Right cardiac atrium (tissue), 5 donors: ENCODE measurements at regions of chr12 and their contacts with region 1.

Region 1: DNA sequence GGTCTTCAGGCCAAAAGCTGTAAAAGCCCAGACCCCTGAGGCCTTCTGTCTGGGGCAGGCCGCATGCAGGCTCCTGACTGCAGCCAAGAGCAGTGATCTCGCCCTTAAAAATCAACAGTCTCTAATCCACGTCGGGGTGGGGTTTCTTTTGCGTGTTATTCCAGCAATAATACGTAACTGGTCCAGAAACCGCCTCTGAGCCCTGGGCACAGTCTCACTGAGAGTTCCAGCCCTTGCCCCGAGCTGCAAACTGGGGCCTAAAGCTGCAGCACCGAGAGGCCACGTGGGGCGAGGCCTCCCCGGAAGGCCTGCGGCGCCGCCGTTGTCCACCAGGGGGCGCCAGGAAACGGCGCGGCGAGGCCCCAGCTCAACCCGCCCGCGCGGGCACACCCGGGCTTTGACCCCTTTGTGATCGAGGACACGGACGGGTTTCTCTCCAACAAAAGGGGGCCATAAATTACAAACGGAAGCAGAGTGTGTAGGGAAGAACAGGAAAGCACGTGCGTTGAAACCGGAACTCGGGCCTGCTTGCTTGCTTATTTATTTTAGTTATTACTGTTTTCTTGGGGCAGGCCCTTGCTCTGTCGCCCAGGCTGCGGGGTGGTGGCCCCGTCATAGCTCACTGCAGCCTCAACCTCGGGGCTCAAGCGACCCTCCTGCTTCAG is 87.2 kb downstream of the NINJ2 start:
- DNase-seq: peak; percentile 88 to 95 (median 95)
- ATAC-seq: peak; percentile 74 to 82
- H3K4me3 ChIP-seq: no peak overlapping the region
- H3K27ac ChIP-seq: peak overlapping the region; percentile 75
- H3K4me1 ChIP-seq: peaks cover 12% of the 10 kb centered on the region
- H3K27me3 ChIP-seq: no peaks in the 10 kb centered on the region

Region 2: DNA sequence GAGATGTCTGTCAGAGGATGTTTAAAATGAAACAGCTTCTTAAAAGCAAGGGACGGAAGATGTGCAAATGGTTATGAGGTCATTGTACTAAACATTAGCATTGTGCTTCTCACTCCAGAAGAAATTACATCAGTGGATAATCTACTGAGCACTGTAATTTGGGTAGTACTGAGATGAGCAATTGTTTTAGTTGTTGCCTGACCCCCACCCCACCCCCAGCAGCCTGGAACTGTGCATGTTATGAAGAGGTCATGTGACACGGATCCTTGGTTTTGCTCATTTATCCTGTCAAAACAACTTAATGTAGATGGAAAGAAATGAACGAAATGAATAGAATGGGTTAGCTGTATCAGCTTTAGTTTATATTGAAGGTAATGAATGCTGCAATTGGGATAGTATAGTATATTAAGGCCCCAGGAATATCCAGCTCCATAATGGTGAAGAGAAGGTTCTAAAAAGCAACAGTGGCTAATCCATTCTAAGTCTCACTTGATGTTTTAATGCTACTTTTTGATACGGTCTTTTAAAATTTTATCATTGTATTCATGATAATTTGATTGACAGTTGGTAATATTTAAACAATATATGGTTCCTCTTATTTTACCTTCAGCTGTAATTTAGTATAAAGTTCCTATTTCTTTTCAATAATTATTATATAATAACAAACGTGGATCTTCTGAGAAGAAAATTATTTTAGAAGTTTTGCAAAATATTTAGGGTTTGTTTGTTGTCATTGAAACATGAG is 234.8 kb after region 1 on chr12:
- intact Hi-C with region 1: loop called (anchors 5 kb)
- DNase-seq: no peak
- ATAC-seq: peak in 1 of 2 donors; percentile 33
- H3K4me3 ChIP-seq: no peak overlapping the region
- H3K27ac ChIP-seq: no peak overlapping the region
- H3K4me1 ChIP-seq: peaks cover 3% of the 10 kb centered on the region
- H3K27me3 ChIP-seq: no peaks in the 10 kb centered on the region

Region 3: GRCh38 chr12:905261-906031 is 329.4 kb after region 1 on chr12:
- intact Hi-C with region 1: no loop called
- DNase-seq: no peak
- ATAC-seq: peak in 1 of 2 donors; percentile 16
- H3K4me3 ChIP-seq: no peak overlapping the region
- H3K27ac ChIP-seq: no peak overlapping the region
- H3K4me1 ChIP-seq: no peaks in the 10 kb centered on the region
- H3K27me3 ChIP-seq: no peaks in the 10 kb centered on the region

Region 4: GRCh38 chr12:949453-950191 is 373.5 kb after region 1 on chr12 and contains the start of gene RAD52:
- intact Hi-C with region 1: loop called in 2 of 4 experiments (anchors 2 to 10 kb)
- DNase-seq: peak; percentile 98 to 99 (median 99)
- ATAC-seq: peak; percentile 98
- H3K4me3 ChIP-seq: peak within 1 kb of the TSS; percentile 75
- H3K27ac ChIP-seq: peak within 1 kb of the TSS; percentile 93
- H3K4me1 ChIP-seq: peaks cover 2% of the 10 kb centered on the region
- H3K27me3 ChIP-seq: no peaks in the 10 kb centered on the region
- total RNA-seq, gene RAD52: 8.1 to 10.0 (median 9.3) TPM